PC-9 (cell line): ENCODE measurements at regions of chr9 and their contacts with region 1.

Region 1: DNA sequence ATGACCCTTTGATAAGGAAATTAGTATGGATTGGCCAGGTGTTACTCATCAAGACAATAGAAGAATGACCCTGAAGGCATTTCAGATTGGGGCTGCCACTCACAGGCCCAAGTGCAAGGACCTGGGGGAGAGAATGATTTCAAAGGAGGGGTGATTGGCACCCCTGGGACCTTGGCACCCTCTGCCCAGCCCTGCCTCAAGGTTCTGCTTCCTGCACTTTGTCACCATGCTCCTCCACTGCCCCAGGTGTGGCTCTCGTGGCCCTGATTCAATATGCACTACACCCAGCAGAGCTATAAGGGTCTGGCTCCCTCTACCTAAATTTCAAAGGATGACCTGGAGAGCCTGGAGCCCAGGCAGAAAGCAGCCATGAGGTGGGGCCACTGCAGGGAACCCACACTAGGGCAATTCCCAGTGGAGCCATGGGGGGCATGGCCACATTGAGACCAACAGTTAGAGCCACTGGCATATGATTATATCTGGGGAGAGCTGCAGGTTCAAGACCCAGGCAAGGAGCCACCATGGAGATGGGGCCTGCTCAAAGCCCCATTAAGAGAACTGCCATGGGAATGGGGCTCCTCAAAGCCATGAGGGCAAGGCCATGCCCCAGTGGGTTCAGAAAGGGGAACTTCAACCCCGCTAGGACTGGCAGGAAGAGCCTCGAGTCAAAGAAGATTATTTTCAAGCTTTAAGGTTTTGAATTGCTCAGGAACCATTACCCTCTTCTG is 93.0 kb downstream of the CEMIP2 start:
- DNase-seq: peak in 1 of 2 experiments; percentile 60
- H3K4me3 ChIP-seq: no peak overlapping the region
- H3K27ac ChIP-seq: peak overlapping the region; percentile 71
- H3K4me1 ChIP-seq: peaks cover 64% of the 10 kb centered on the region
- H3K27me3 ChIP-seq: no peaks in the 10 kb centered on the region
- CTCF ChIP-seq: no peak

Region 2: DNA sequence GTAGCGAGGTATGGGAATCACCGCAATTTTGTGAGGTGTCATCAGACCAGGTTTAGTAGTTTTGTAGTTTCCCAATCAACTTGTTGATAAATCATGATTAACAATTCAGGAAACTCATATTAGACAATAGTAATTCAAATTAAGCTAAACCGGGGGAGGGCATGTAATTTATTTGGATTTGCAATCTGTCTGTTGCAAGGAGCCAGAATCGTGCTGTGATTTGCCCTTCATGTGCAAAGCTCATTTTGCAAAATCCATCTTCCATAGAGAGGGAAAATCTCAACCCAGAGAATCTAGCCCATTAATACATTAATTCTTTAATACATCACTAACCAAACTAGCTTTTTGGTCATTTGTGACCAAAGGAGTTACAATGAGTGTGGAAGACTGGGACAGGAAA is 389.1 kb before region 1 on chr9:
- CTCF ChIA-PET with region 1: no interaction called
- POLR2A ChIA-PET with region 1: no interaction called
- intact Hi-C with region 1: no loop called
- DNase-seq: no peak
- H3K4me3 ChIP-seq: no peak overlapping the region
- H3K27ac ChIP-seq: no peak overlapping the region
- H3K4me1 ChIP-seq: no peaks in the 10 kb centered on the region
- H3K27me3 ChIP-seq: no peaks in the 10 kb centered on the region
- CTCF ChIP-seq: no peak

Region 3: GRCh38 chr9:71806901-71807307 is 131.6 kb after region 1 on chr9:
- CTCF ChIA-PET with region 1: no interaction called
- POLR2A ChIA-PET with region 1: no interaction called
- intact Hi-C with region 1: no loop called
- DNase-seq: peak; percentile 66 to 79
- H3K4me3 ChIP-seq: no peak overlapping the region
- H3K27ac ChIP-seq: no peak overlapping the region
- H3K4me1 ChIP-seq: no peaks in the 10 kb centered on the region
- H3K27me3 ChIP-seq: no peaks in the 10 kb centered on the region
- CTCF ChIP-seq: peak; percentile 89

Region 4: GRCh38 chr9:72635197-72635596 is 959.9 kb after region 1 on chr9:
- CTCF ChIA-PET with region 1: no interaction called
- POLR2A ChIA-PET with region 1: interaction called, 11 read pairs
- intact Hi-C with region 1: no loop called
- DNase-seq: no peak
- H3K4me3 ChIP-seq: no peak overlapping the region
- H3K27ac ChIP-seq: no peak overlapping the region
- H3K4me1 ChIP-seq: no peaks in the 10 kb centered on the region
- H3K27me3 ChIP-seq: no peaks in the 10 kb centered on the region
- CTCF ChIP-seq: no peak